Transverse colon (tissue), 4 donors: ENCODE measurements at regions of chr10 and their contacts with region 1.

Region 1: GRCh38 chr10:100939763-100940344 is 27.1 kb downstream of the SLF2 start:
- DNase-seq: no peak
- H3K4me3 ChIP-seq: no peak overlapping the region
- H3K27ac ChIP-seq: no peak overlapping the region
- H3K4me1 ChIP-seq: no peaks in the 10 kb centered on the region
- H3K27me3 ChIP-seq: no peaks in the 10 kb centered on the region
- CTCF ChIP-seq: no peak
- EP300 ChIP-seq: no peak
- POLR2A ChIP-seq: no peak

Region 2: GRCh38 chr10:100535715-100536353 is 404.0 kb before region 1 on chr10 and contains the start of gene HIF1AN:
- in situ Hi-C with region 1: no loop called
- intact Hi-C with region 1: no loop called
- DNase-seq: peak; percentile 90
- H3K4me3 ChIP-seq: peak within 1 kb of the TSS; percentile 60 to 97 (median 87)
- H3K27ac ChIP-seq: peak within 1 kb of the TSS; percentile 71 to 86 (median 81)
- H3K4me1 ChIP-seq: peaks cover 15 to 26% (median 16%) of the 10 kb centered on the region in 4 donors
- H3K27me3 ChIP-seq: no peaks in the 10 kb centered on the region
- CTCF ChIP-seq: peak; percentile 85 to 93 (median 87)
- EP300 ChIP-seq: no peak
- POLR2A ChIP-seq: peak; percentile 86
- total RNA-seq, gene HIF1AN: 12.8 to 47.2 (median 21.7) TPM

Region 3: DNA sequence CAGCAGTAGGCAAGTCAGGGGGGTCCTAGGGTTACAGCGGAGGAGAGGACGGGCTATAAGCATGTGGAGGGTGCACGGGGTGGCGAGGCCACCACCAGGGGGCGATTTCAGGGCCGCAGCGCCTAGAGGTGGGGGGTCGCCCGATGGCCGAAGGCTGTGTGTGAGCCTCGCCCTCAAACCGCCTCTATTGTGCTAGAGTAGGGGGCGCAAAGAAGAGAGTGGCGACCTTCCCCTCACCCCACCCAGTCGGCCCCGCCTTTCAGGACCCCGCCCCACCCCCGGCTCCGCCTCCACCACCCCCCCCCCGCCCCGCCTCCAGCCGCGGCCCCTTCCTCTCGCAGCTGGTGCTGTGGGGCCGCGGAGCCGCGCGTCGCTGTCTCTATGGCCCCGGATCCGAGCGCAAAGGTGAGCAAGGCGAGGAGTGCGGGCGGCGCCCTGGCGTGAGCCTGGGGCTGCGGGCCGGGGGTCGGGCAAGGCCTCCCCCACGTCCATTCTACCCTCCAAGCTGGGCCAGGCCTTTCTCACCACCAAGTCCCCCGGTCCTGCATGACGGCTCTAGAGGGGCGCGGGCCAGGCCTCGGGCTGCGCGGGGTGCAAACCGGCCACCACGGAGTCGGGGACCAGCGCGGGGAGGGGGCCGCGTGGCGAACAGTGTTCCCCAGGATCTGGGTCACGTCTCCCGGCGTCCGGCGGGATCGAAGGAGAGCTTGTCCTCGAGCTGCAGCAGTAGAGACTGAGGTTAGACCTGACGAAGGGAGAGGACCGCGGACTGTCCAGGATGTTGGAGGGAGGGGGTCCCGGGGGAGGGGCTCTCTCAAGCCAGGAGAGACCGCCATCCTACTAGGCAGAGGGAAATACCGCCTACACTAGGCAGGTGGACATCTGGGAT is 29.6 kb after region 1 on chr10 and contains the start of gene SEMA4G:
- in situ Hi-C with region 1: no loop called
- intact Hi-C with region 1: loop called (anchors 1 kb)
- DNase-seq: peak; percentile 59
- H3K4me3 ChIP-seq: peak within 1 kb of the TSS; percentile 66 to 88 (median 81)
- H3K27ac ChIP-seq: peak within 1 kb of the TSS; percentile 81 to 91 (median 90)
- H3K4me1 ChIP-seq: peaks cover 8 to 47% (median 27%) of the 10 kb centered on the region in 4 donors
- H3K27me3 ChIP-seq: no peaks in the 10 kb centered on the region
- CTCF ChIP-seq: peak; percentile 75 to 90 (median 78)
- EP300 ChIP-seq: no peak
- POLR2A ChIP-seq: peak; percentile 33
- total RNA-seq, gene SEMA4G: 94.0 to 221 (median 121) TPM